ENCODE measurements at regions of chr15 and their contacts with region 1.

Region 1: GRCh38 chr15:85318048-85318731 is 62.2 kb upstream of the AKAP13 start:
- DNase-seq: peak; percentile 98
- ATAC-seq: peak; percentile 88
- H3K4me3 ChIP-seq: no peak overlapping the region
- H3K27ac ChIP-seq: no peak overlapping the region; the same call in 1 of the 2 replicates
- H3K4me1 ChIP-seq: peaks cover 14% of the 10 kb centered on the region
- H3K27me3 ChIP-seq: no peaks in the 10 kb centered on the region
- CTCF ChIP-seq: peak; percentile 28
- POLR2A ChIP-seq: no peak
- RAD21 ChIP-seq: no peak

Region 2: GRCh38 chr15:85380217-85380811 is 62.1 kb after region 1 on chr15 and contains the start of gene AKAP13:
- CTCF ChIA-PET with region 1: no interaction called
- POLR2A ChIA-PET with region 1: no interaction called
- dilution Hi-C with region 1: no loop called
- in situ Hi-C with region 1: no loop called
- intact Hi-C with region 1: no loop called
- DNase-seq: peak; percentile 99
- ATAC-seq: peak; percentile 93
- H3K4me3 ChIP-seq: peak within 1 kb of the TSS; percentile 67
- H3K27ac ChIP-seq: peak within 1 kb of the TSS; percentile 78
- H3K4me1 ChIP-seq: peaks cover 3% of the 10 kb centered on the region
- H3K27me3 ChIP-seq: no peaks in the 10 kb centered on the region
- CTCF ChIP-seq: no peak
- POLR2A ChIP-seq: peak; percentile 73
- RAD21 ChIP-seq: peak; percentile 26
- total RNA-seq, gene AKAP13: 46.4 and 46.9 TPM in 2 replicates

Region 3: GRCh38 chr15:85407804-85408746 is 89.9 kb after region 1 on chr15:
- CTCF ChIA-PET with region 1: interaction called, 7 read pairs
- POLR2A ChIA-PET with region 1: no interaction called
- dilution Hi-C with region 1: no loop called
- in situ Hi-C with region 1: no loop called
- intact Hi-C with region 1: loop called (anchors 5 kb)
- DNase-seq: peak; percentile 90
- ATAC-seq: peak; percentile 65
- H3K4me3 ChIP-seq: no peak overlapping the region
- H3K27ac ChIP-seq: peak overlapping the region; percentile 32; the same call in 1 of the 2 replicates
- H3K4me1 ChIP-seq: peaks cover 20% of the 10 kb centered on the region
- H3K27me3 ChIP-seq: no peaks in the 10 kb centered on the region
- CTCF ChIP-seq: no peak
- POLR2A ChIP-seq: no peak
- RAD21 ChIP-seq: no peak

Region 4: GRCh38 chr15:85426481-85426880 is 108.3 kb after region 1 on chr15:
- CTCF ChIA-PET with region 1: no interaction called
- POLR2A ChIA-PET with region 1: no interaction called
- dilution Hi-C with region 1: no loop called
- in situ Hi-C with region 1: no loop called
- intact Hi-C with region 1: no loop called
- DNase-seq: no peak
- ATAC-seq: peak; percentile 32; the same call in 1 of the 2 replicates
- H3K4me3 ChIP-seq: no peak overlapping the region
- H3K27ac ChIP-seq: no peak overlapping the region
- H3K4me1 ChIP-seq: peaks cover 2% of the 10 kb centered on the region; the same call in 1 of the 2 replicates
- H3K27me3 ChIP-seq: no peaks in the 10 kb centered on the region
- CTCF ChIP-seq: no peak
- POLR2A ChIP-seq: no peak
- RAD21 ChIP-seq: no peak

Region 5: DNA sequence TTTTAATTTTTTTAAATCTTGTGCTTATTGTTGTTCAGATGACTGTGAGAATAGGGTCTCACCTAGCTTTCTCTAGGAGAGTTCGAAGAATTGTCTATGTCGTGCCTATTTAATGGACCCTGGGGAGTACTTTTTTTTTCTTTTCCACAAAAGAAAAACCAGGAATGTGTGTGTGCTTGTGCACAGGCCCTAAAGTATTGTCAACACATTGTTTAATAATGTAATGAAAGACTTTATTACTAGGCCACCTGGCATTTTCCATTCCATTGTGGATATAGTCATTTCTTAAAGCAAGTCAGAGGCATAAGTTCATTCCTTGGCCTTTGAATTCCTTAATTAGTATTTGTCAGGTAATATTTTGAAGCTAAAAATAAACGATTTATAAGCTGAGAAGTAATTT is 340.6 kb after region 1 on chr15:
- CTCF ChIA-PET with region 1: no interaction called
- POLR2A ChIA-PET with region 1: no interaction called
- dilution Hi-C with region 1: no loop called
- in situ Hi-C with region 1: no loop called
- intact Hi-C with region 1: no loop called
- DNase-seq: no peak
- ATAC-seq: no peak
- H3K4me3 ChIP-seq: no peak overlapping the region
- H3K27ac ChIP-seq: no peak overlapping the region
- H3K4me1 ChIP-seq: no peaks in the 10 kb centered on the region
- H3K27me3 ChIP-seq: no peaks in the 10 kb centered on the region
- CTCF ChIP-seq: no peak
- POLR2A ChIP-seq: no peak
- RAD21 ChIP-seq: no peak

Measured in IMR-90 (cell line).